ENCODE measurements at regions of chr19 and their contacts with region 1.

Region 1: GRCh38 chr19:47256688-47257443 is 541 bp downstream of the CCDC9 start:
- DNase-seq: peak; percentile 94
- ATAC-seq: peak; percentile 76
- H3K4me3 ChIP-seq: peak overlapping the region; percentile 77; the same call in 1 of the 2 replicates
- H3K27ac ChIP-seq: peak overlapping the region; percentile 64
- H3K4me1 ChIP-seq: peaks cover 24% of the 10 kb centered on the region
- H3K27me3 ChIP-seq: no peaks in the 10 kb centered on the region
- CTCF ChIP-seq: no peak

Region 2: GRCh38 chr19:46850228-46851203 is 406.4 kb before region 1 on chr19 and contains the start of gene AP2S1:
- CTCF ChIA-PET with region 1: no interaction called
- POLR2A ChIA-PET with region 1: no interaction called
- intact Hi-C with region 1: loop called (anchors 10 kb)
- DNase-seq: peak; percentile 97
- ATAC-seq: peak; percentile 93
- H3K4me3 ChIP-seq: peak within 1 kb of the TSS; percentile 89
- H3K27ac ChIP-seq: peak within 1 kb of the TSS; percentile 64
- H3K4me1 ChIP-seq: peaks cover 9% of the 10 kb centered on the region; the same call in 1 of the 2 replicates
- H3K27me3 ChIP-seq: no peaks in the 10 kb centered on the region
- CTCF ChIP-seq: no peak
- total RNA-seq, gene AP2S1: 245 and 330 TPM in 2 replicates

Region 3: GRCh38 chr19:47406711-47407416 is 150.0 kb after region 1 on chr19:
- CTCF ChIA-PET with region 1: no interaction called
- POLR2A ChIA-PET with region 1: no interaction called
- intact Hi-C with region 1: no loop called
- DNase-seq: no peak
- ATAC-seq: no peak
- H3K4me3 ChIP-seq: no peak overlapping the region
- H3K27ac ChIP-seq: no peak overlapping the region
- H3K4me1 ChIP-seq: no peaks in the 10 kb centered on the region
- H3K27me3 ChIP-seq: no peaks in the 10 kb centered on the region
- CTCF ChIP-seq: no peak

Measured in PC-3 (cell line).